Activated CD4-positive, alpha-beta memory T cell treated with anti-CD3 and anti-CD28 coated beads, Interleukin-2, amount 10 ng/mL, durations not matched to agents 7 days and 5 days (primary cell): ENCODE measurements at regions of chr5 and their contacts with region 1.

Region 1: GRCh38 chr5:65562731-65563701 is at the starts of genes CENPK and PPWD1:
- DNase-seq: peak; percentile 97
- H3K4me3 Mint-ChIP-seq: peak within 1 kb of the TSS; percentile 93
- H3K27ac Mint-ChIP-seq: peak within 1 kb of the TSS; percentile 98
- H3K4me1 Mint-ChIP-seq: peaks cover 58% of the 10 kb centered on the region
- H3K27me3 Mint-ChIP-seq: no peaks in the 10 kb centered on the region
- total RNA-seq, gene CENPK: 86.0 to 88.7 TPM
- total RNA-seq, gene PPWD1: 46.7 to 50.0 TPM

Region 2: DNA sequence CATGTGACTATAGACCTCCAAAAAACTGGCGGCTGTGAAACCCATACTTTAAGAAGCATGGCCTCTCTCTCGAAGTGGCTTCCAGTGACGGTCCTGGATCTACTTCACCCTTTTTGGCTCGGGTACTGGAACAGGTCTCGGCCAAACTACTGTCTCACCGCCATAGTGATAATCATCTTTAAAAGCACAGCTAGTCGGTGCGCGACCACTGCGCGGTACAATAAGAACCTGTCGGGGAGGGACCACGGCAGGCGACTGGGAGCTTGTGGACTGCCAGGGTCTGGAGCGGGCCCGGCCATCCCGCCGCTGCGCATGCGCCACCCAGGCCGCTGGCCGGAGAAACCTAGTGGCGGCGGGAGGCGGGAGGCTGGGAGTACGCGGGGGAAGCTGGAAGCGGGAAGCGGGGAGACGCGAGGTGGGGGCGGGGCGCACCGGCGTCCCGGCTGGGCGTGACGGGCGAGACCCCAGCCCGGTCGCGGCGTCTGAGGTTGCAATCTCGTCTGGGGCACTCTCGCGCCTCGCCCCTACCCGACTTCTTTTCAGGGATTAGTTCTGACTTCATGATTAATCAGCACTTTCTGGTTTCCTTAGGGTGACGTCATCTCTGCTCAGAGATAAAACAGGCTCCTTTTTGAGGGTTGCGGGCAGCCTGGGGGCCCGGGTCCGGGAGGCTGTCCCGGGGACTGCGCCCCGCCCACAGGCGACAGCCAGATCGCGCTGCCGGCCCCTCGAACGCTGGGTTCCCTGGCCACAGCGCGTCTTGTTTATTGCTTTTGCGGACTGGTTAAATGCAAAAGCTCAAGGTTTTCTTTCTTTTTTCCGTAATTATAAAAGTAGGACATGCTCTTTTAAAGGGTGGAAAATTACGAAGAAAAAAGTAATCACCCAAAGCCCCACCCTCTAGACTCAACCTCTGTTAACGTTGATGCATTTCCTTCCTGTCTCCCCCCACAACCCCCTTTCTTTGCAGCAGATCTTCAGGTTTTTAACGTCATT is 527.5 kb before region 1 on chr5:
- CTCF ChIA-PET with region 1: no interaction called
- POLR2A ChIA-PET with region 1: interaction called, 18 read pairs
- DNase-seq: peak; percentile 86
- H3K4me3 Mint-ChIP-seq: peak overlapping the region; percentile 71
- H3K27ac Mint-ChIP-seq: peak overlapping the region; percentile 91
- H3K4me1 Mint-ChIP-seq: peaks cover 38% of the 10 kb centered on the region
- H3K27me3 Mint-ChIP-seq: no peaks in the 10 kb centered on the region

Region 3: DNA sequence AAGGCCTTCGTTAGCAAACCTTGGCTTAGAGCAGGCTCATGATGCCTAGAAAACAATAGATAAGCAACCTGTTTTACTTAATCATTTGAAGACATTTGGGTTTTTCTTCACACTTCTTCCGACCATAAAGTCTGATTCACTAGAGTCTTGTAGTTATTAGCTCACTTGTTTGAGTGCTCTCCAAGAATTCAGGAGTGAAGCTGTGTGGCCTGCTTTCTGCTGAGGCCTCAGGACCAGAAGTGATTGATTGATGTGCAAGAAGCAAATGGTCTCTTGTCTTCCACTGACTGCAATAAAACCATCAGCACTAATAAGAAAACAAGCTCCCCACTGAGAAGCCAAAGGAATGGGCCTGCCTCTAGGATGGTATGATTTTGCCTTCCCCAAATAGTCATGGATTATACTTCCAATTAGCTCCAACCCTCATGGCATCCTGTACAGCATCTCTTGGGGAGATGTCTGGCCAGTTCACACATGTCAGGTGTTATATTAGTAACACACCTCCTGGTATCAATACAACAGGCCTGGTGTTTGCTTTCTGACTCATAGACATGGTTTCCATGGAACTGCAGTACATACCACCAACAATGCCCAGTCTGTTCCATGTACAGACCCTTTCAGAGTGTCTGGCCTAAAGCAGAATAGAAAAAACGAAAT is 476.7 kb before region 1 on chr5:
- CTCF ChIA-PET with region 1: no interaction called
- POLR2A ChIA-PET with region 1: no interaction called
- DNase-seq: no peak
- H3K4me3 Mint-ChIP-seq: no peak overlapping the region
- H3K27ac Mint-ChIP-seq: no peak overlapping the region
- H3K4me1 Mint-ChIP-seq: no peaks in the 10 kb centered on the region
- H3K27me3 Mint-ChIP-seq: peaks cover 5% of the 10 kb centered on the region

Region 4: GRCh38 chr5:65525726-65526125 is 37.3 kb before region 1 on chr5:
- CTCF ChIA-PET with region 1: no interaction called
- POLR2A ChIA-PET with region 1: interaction called, 18 read pairs
- DNase-seq: no peak
- H3K4me3 Mint-ChIP-seq: no peak overlapping the region
- H3K27ac Mint-ChIP-seq: no peak overlapping the region
- H3K4me1 Mint-ChIP-seq: no peaks in the 10 kb centered on the region
- H3K27me3 Mint-ChIP-seq: no peaks in the 10 kb centered on the region

Region 5: GRCh38 chr5:65577141-65577540 is 14.1 kb after region 1 on chr5:
- CTCF ChIA-PET with region 1: interaction called, 3 read pairs
- POLR2A ChIA-PET with region 1: interaction called, 21 read pairs
- DNase-seq: no peak
- H3K4me3 Mint-ChIP-seq: no peak overlapping the region
- H3K27ac Mint-ChIP-seq: no peak overlapping the region
- H3K4me1 Mint-ChIP-seq: peaks cover 12% of the 10 kb centered on the region
- H3K27me3 Mint-ChIP-seq: no peaks in the 10 kb centered on the region

Region 6: DNA sequence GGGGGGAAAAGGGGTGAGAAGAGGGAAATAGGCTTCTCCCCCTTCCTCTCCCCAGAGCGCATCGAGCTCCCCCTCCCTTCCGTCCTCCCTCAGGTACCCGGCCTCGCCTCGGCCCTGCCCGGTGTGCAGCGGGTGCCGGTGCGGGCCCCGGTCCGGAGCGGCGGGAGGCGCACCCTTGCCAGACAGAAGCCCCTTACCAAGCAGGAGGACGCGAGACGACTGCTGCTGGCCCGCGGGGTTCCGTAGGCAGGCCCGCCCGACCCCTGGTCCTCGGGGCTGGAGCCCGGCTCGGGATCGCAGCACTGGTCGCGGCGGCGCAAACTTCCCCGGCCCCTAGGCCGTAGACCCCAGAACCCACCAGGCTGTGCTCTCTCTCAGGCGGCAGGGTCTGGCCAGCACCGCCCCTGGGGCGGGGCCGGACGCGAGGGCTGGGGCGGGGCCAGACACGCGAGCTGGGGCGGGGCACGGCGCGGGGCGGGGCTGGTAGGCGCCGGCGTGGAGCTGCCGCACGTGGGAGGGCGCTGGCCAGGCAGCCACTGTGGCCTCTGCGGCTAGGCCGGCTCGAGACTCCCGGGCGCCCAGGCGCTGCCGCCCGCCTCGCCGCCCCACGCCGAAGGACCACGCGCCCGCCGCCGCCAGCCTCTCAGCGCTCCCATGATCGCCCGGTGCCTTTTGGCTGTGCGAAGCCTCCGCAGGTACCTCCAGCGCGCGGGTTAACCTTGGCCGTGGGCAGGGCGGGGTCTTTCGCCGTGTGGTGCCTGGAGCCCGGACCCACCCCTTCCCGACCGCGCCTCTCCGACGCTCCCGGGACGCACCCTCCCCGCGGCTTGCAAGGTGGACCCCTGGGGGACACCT is 158.9 kb after region 1 on chr5 and contains the starts of genes NLN and SGTB:
- CTCF ChIA-PET with region 1: interaction called, 12 read pairs
- POLR2A ChIA-PET with region 1: interaction called, 32 read pairs
- DNase-seq: peak; percentile 87
- H3K4me3 Mint-ChIP-seq: peak within 1 kb of the TSS; percentile 81
- H3K27ac Mint-ChIP-seq: peak within 1 kb of the TSS; percentile 77
- H3K4me1 Mint-ChIP-seq: peaks cover 40% of the 10 kb centered on the region
- H3K27me3 Mint-ChIP-seq: no peaks in the 10 kb centered on the region
- total RNA-seq, gene NLN: 7.6 to 8.0 TPM
- total RNA-seq, gene SGTB: 19.7 to 23.0 TPM

Region 7: DNA sequence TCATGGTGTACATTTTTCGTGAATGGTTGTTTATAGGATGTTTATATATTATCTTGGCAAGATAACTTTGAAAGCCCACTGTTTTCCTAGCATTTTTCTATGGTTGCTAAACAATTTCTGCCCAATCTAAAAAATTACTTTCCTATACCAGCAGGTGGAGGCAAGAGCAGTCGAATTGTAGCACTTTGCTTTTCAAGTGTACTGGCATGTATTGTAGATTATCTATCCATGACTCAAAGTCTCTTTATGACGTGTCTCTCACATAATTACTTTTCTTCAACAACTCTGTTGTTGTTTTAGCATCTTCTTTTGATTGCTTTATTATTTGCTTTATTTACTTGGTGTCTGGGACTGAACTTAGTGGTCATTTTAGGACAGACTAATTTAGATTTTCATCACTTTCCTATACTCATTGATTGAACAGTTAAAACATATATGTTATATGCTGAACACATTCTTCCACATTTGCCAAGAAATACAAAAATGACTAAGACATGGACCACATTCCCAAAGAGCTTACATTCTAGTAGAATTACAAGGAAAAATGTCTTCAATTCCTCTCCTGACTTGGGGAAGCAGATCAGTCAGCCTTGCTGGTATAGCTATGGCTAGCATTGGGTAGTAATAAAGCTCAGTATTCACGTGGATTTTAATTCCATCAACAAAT is 179.7 kb after region 1 on chr5:
- CTCF ChIA-PET with region 1: no interaction called
- POLR2A ChIA-PET with region 1: no interaction called
- DNase-seq: peak; percentile 35
- H3K4me3 Mint-ChIP-seq: no peak overlapping the region
- H3K27ac Mint-ChIP-seq: no peak overlapping the region
- H3K4me1 Mint-ChIP-seq: peaks cover 11% of the 10 kb centered on the region
- H3K27me3 Mint-ChIP-seq: no peaks in the 10 kb centered on the region